ENCODE measurements at regions of chr14 and their contacts with region 1.

Region 1: DNA sequence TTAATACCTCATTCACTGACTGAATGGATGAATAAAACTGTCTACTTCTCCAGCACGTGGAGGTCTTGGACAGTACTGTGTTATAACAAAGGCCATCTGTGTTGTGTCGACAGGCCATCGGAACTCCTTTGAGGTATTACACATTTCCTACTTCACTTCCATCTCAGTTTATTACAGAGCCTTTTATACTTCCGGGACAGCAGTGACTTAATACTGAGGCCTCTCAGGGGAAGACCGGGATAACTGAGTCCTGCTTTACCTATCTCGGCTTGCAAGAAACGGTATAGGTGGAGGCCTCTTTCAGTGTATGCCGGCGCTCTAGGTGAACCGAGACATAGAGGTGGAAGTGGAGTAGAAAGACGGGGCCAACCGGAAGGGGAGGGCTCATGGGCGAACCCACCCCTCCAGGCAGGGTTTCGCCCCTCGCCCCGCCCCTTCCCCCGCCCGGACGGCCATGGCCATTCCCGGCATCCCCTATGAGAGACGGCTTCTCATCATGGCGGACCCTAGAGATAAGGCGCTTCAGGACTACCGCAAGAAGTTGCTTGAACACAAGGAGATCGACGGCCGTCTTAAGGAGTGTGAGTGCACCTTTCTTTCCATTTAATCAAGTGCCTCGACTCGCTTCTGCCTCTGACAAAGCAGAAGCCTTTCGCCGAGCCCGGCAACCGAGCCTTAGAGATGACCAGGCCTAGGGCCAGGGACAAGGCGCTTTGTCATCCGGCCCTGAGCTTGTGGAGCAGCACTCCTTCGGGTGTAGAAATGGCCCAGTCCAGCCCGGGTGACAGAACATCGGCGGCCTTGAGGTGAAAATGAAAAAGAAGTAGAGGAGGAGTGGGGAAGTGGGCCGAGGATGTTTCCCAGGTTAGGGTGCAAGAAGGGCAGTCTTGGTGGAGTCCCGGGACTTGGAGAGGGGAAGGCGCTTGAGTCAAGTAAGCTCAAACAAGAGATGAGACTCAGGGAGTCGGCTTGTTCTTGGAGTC is at the start of gene PSMC6:
- DNase-seq: peak; percentile 97
- H3K4me3 Mint-ChIP-seq: peak within 1 kb of the TSS; percentile 100
- H3K27ac Mint-ChIP-seq: peak within 1 kb of the TSS; percentile 97
- H3K4me1 Mint-ChIP-seq: peaks cover 47% of the 10 kb centered on the region
- H3K27me3 Mint-ChIP-seq: no peaks in the 10 kb centered on the region
- total RNA-seq, gene PSMC6: 103 to 114 TPM

Region 2: GRCh38 chr14:52695481-52696091 is 11.4 kb before region 1 on chr14 and contains the start of gene ERO1A:
- CTCF ChIA-PET with region 1: interaction called, 3 read pairs
- intact Hi-C with region 1: loop called (anchors 1 kb)
- DNase-seq: peak; percentile 72
- H3K4me3 Mint-ChIP-seq: peak within 1 kb of the TSS; percentile 99
- H3K27ac Mint-ChIP-seq: peak within 1 kb of the TSS; percentile 99
- H3K4me1 Mint-ChIP-seq: peaks cover 33% of the 10 kb centered on the region
- H3K27me3 Mint-ChIP-seq: no peaks in the 10 kb centered on the region
- total RNA-seq, gene ERO1A: 87.4 to 90.4 TPM

Measured in activated naive CD4-positive, alpha-beta T cell treated with anti-CD3 and anti-CD28 coated beads for 36 hours (primary cell).